ENCODE measurements at regions of chr2 and their contacts with region 1.

Region 1: DNA sequence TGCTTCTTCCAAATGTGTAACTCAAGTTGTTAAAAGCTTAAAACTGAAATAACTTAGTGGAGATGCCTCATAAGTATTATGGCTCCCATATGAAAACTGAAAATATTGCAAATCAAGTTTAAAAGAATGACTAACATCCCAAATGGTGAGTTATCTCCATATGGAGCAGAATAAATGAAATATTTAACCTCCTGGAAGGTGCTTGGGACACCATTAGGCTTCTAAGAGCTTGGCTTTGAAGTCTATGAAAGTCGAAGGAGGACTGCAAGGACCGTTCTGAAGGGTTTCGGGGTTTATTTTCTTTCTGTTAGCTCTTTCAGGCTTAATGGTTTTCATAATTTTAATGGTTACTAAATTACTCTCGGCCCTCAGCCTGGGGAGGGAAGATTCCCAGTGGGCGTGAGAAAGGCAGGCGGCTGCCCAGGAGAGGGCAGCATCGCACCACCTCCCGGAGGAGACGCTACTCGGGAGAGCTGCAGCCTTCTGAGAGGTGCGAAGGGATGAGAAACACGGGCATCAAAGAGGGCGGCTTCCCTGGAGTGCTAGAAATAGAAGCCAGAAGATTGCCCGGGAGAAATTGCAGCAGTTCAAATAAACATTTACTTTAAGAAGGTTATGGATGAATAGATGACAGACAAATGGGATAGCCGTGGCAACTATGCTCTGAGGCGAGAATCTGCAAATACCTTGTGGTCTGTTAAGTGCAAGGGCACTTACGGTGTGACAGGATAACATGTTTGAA is 43.1 kb downstream of the MAP3K19 start:
- DNase-seq: no peak
- H3K4me3 ChIP-seq: no peak overlapping the region
- H3K27me3 ChIP-seq: peaks cover 7% of the 10 kb centered on the region; the same call in 1 of the 2 replicates
- CTCF ChIP-seq: peak; percentile 97

Region 2: DNA sequence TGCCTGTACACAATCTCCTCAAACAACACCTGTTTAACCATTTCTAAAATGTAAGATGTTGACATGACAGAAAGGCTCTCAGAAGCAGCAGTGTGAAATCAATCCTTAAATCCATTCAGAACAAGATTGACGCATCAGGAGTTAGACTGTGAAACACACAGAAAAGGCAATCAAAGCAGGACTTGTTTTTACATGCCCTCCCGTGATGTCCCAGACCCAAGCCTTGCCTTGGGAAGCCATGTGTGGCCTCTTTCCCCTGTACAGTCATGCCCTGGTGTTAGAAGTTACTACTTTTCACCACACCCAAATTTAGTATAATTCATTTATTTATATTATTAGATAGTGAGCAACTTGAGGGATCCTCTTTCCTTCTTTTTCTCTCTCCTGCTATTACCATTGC is 1551.6 kb before region 1 on chr2:
- CTCF ChIA-PET with region 1: no interaction called
- POLR2A ChIA-PET with region 1: no interaction called
- DNase-seq: no peak
- H3K4me3 ChIP-seq: no peak overlapping the region
- H3K27me3 ChIP-seq: no peaks in the 10 kb centered on the region
- CTCF ChIP-seq: no peak

Region 3: DNA sequence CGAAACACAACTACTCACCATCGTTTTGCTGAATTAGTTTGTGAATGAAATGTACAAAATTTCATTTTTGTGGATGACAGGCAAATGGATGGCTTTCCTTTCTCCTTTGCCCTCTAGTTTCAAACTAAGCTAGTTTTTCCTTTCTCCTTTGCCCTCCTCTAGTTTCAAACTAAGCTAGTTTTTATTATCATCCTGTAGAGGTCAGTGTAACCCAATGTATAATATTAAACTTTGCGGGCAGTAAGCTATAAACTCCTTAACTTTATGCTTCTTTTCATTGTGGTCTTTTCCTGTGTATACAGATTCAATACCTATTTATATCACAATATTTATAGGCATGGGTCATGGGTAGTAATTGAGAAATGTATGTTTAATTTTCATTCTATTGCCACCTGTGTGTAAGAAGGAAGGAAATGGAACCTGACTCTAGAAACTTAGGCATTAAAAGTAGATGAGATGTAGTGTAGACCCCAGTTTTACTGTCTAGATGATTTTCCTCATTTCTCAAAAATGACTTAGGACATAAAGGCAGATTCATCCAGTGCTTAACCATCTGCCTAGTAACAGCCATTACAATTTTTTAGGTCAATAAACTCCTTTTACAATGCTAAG is 15.1 kb before region 1 on chr2:
- CTCF ChIA-PET with region 1: interaction called, 17 read pairs
- POLR2A ChIA-PET with region 1: no interaction called
- DNase-seq: no peak
- H3K4me3 ChIP-seq: no peak overlapping the region
- H3K27me3 ChIP-seq: peaks cover 3% of the 10 kb centered on the region; the same call in 1 of the 2 replicates
- CTCF ChIP-seq: peak; percentile 43

Region 4: GRCh38 chr2:135076550-135076949 is 72.4 kb after region 1 on chr2:
- CTCF ChIA-PET with region 1: no interaction called
- POLR2A ChIA-PET with region 1: no interaction called
- DNase-seq: no peak
- H3K4me3 ChIP-seq: no peak overlapping the region
- H3K27me3 ChIP-seq: no peaks in the 10 kb centered on the region
- CTCF ChIP-seq: no peak

Region 5: GRCh38 chr2:135150684-135151083 is 146.5 kb after region 1 on chr2:
- CTCF ChIA-PET with region 1: no interaction called
- POLR2A ChIA-PET with region 1: no interaction called
- DNase-seq: no peak
- H3K4me3 ChIP-seq: no peak overlapping the region
- H3K27me3 ChIP-seq: no peaks in the 10 kb centered on the region
- CTCF ChIP-seq: no peak

Region 6: DNA sequence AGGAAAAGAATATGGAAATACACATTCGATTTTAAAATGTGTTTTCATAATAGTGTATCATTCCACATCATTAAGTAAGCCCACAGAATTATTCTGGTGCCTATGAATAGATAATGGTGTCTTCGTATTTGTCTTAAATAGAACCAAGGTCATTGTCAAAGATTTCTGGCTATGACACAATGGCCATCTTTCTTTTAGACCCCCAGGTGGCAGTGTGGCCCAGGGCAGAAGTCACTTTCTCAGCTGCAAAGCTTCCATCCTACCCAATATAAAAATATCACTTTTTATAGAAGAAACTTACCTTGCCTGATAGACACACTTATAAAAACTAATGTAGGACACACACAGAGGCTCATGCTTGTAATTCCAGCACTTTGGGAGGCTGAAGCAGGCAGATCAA is 469.4 kb after region 1 on chr2:
- CTCF ChIA-PET with region 1: interaction called, 14 read pairs
- POLR2A ChIA-PET with region 1: no interaction called
- DNase-seq: no peak
- H3K4me3 ChIP-seq: no peak overlapping the region
- H3K27me3 ChIP-seq: no peaks in the 10 kb centered on the region
- CTCF ChIP-seq: peak; percentile 48

Region 7: DNA sequence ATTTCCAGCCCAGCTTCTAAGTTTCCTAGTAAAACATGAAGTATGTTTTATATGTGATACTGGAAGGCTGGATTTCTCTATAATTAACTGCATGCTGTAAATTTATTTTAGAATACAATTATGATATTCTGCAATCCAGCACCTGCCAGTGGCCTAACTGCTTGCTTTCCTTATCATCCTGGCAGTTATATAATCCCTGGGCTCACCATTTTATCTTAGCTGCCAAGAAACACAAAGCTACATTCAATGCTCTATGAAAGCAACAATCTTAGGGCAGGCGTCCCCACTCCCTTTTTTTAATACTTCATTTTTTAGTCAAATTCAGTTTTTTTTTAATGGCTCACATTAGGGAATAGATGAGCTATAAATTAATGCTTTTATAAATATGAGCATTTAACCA is 699.1 kb after region 1 on chr2:
- CTCF ChIA-PET with region 1: interaction called, 82 read pairs
- POLR2A ChIA-PET with region 1: no interaction called
- DNase-seq: no peak
- H3K4me3 ChIP-seq: no peak overlapping the region
- H3K27me3 ChIP-seq: no peaks in the 10 kb centered on the region
- CTCF ChIP-seq: no peak

Region 8: DNA sequence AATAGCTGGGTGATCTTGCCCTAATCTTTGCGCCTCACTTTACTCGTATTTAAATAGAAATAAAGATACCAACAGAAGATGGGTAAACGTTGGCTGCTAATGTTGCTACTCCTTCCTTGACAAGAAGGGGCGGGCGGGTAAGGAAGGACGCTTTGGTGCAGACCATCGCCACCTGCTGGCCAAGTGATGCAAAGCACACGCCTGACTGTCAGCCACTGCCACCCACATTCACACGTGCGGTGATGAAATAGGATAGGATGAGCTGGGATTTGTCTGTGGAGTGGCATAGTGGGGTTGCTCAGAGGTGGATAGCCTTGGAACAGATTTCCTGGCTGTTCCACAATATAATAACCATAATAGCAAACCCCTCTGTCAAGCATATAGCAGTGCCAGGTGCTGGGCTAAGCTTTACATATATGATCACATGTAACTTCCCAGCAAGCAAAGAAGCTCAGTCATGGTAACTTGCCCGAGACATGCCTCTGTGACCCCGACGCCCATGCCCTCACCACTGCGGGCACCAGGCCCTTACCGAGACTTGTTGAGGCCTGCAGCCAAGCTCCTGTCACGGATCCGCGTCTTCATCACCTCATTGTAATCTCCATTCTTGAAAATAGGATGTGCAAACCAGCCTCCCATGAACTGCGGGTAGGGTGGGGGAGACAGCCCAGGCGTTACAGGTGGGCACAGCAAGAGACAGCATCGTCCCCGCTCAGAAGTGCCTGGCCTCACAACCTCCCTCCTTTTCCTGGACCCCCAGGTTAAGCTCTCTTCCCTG is 793.5 kb after region 1 on chr2:
- CTCF ChIA-PET with region 1: interaction called, 10 read pairs
- POLR2A ChIA-PET with region 1: no interaction called
- DNase-seq: peak; percentile 19
- H3K4me3 ChIP-seq: no peak overlapping the region
- H3K27me3 ChIP-seq: no peaks in the 10 kb centered on the region
- CTCF ChIP-seq: peak; percentile 96